Right ventricle myocardium inferior (tissue), 1 donor: ENCODE measurements at regions of chr1 and their contacts with region 1.

Region 1: GRCh38 chr1:33152685-33153432 is 29.0 kb downstream of the TRIM62 start:
- DNase-seq: peak; percentile 94
- ATAC-seq: peak; percentile 96

Region 2: DNA sequence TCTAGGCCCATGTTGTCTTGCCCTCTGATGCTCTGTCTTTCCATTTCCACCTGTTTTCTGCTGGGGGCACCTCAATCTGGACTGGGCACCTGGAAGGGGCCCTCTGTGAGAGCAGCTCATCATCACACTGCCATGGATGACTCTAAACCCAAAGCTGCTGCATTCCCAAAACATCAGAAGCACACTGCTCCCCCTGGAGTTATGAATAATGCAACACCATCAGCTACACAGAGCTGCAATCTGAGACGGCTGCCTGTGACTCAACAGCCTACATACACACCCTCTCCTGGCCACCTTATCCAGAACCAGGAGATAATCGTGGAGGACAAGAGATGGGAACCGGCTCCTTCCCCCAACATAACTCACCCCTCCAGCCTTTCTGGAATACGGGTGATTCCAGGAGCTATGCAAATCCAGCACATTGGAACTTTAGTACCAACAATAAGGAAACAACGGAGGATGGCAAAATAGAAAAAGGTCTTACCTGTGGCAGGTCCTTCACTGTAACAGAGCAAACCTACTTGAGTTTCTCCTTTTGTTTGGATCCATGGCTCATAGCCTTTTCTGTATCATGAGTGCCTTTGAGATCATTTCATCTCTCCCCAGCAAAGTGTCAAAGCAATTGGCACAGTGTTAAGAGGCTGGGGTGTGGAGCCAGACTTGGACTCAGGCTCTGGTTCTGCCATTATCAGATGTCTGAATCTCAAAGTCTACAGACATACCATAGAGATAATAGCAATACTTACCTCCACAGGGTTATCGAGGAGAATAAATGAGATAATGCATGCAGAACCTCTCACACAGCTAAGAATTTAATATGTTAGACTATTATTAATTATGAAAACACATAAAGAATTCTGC is 145.4 kb before region 1 on chr1:
- intact Hi-C with region 1: no loop called
- DNase-seq: no peak
- ATAC-seq: peak; percentile 56

Region 3: DNA sequence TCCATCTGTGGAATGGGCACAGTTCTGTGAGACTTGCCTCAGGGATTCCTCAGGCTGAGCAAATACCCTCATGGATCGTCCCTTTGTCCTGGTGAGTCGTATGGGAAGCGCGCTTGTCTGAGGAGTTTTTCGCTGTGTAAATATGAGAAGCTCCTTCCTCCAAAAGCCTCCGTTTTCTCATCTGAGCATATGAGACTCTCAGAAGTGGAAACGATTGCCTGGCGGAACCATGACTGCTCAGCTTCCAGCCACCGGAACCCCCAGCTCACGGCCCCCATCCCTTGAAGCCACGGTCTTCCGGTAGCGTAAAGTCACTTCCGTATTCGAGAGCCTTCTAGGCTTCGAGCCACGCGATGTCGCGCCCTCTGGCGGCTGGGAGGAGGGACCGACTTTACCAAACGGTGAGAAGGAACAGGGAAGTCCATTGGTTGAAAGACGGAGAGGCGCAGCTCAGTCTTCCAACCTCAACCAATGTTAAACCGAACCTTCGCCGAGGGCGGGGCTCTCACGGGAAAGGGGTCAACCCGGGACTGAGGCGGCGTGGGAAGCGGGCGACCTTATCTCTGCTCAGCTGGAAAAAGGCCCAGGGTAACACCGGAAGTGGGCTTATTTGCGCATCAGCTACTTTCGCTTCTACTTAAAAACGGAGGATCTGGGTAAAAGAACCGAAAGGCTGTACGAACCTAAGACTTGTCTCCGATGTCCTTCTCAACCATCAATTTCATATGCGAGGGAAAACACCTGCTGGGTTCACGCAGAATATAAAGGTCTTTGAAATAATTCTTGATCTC is 25.7 kb before region 1 on chr1:
- intact Hi-C with region 1: loop called (anchors 2 kb)
- DNase-seq: peak; percentile 99
- ATAC-seq: peak; percentile 97

Region 4: GRCh38 chr1:33206340-33206739 is 53.5 kb after region 1 on chr1:
- intact Hi-C with region 1: no loop called
- DNase-seq: no peak
- ATAC-seq: no peak

Region 5: GRCh38 chr1:33256701-33257399 is 104.0 kb after region 1 on chr1:
- intact Hi-C with region 1: loop called (anchors 10 kb)
- DNase-seq: peak; percentile 83
- ATAC-seq: peak; percentile 40

Region 6: GRCh38 chr1:33384040-33384812 is 231.4 kb after region 1 on chr1:
- intact Hi-C with region 1: no loop called
- DNase-seq: no peak
- ATAC-seq: no peak